ENCODE measurements at regions of chr5 and their contacts with region 1.

Region 1: GRCh38 chr5:54217826-54218503 is 92.4 kb downstream of the ARL15 start:
- DNase-seq: no peak

Region 2: GRCh38 chr5:53170748-53171349 is 1047.1 kb before region 1 on chr5:
- intact Hi-C with region 1: loop called (anchors 5 kb)
- DNase-seq: no peak

Region 3: DNA sequence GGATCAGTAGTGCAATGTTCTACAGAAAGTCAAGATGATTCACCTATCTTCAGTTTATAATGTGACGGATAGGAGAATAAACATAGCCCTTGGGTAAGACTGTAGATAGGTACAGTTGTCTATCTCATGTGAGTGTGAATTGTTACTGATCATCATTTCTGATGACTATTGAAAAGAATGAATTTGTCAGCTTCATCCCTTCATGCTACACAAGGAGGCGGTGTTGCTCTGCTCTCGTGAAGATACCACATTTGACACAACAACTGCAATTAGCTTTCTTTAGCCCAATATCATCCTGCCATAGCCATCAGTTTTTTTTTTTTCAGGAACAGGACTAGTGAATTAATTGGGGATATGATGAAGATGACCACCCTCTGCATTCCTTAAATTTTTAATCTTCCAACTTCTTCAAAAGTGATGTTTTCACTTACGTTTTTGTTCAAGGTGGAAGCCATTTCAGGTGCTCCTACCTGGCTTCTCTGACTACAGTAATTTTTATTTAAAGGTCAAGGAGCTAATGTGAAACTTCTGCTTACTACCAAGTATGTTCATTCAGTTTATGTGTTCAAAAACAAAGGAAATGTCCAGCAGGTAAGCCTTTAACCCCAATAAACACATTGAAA is 955.5 kb before region 1 on chr5:
- intact Hi-C with region 1: loop called (anchors 10 kb)
- DNase-seq: no peak

Measured in cardiac septum (tissue), 1 donor.